ENCODE measurements at regions of chr9 and their contacts with region 1.

Region 1: DNA sequence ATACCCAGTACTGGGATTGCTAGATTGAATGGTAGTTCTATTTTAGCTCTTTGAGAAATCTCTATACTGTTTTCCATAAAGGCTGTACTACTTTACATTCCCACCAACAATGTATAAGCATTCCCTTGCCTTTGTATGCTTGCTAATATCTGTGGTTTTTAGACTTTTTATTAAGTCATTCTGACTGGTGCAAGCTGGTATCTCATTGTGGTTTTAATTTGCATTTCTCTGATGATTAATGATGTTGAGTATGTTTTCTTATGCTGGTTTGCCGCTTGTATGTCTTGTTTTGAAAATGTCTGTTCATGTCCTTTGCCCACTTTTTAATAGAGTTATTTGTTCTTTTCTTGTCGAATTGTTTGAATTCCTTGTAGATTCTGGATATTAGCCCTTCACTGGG is 512.7 kb upstream of the PAPPA start:
- DNase-seq: peak; percentile 87
- ATAC-seq: peak; percentile 66
- H3K4me3 ChIP-seq: no peak overlapping the region
- H3K27ac ChIP-seq: no peak overlapping the region
- H3K4me1 ChIP-seq: peaks cover 14% of the 10 kb centered on the region
- H3K27me3 ChIP-seq: no peaks in the 10 kb centered on the region
- CTCF ChIP-seq: no peak
- POLR2A ChIP-seq: no peak
- RAD21 ChIP-seq: no peak

Region 2: DNA sequence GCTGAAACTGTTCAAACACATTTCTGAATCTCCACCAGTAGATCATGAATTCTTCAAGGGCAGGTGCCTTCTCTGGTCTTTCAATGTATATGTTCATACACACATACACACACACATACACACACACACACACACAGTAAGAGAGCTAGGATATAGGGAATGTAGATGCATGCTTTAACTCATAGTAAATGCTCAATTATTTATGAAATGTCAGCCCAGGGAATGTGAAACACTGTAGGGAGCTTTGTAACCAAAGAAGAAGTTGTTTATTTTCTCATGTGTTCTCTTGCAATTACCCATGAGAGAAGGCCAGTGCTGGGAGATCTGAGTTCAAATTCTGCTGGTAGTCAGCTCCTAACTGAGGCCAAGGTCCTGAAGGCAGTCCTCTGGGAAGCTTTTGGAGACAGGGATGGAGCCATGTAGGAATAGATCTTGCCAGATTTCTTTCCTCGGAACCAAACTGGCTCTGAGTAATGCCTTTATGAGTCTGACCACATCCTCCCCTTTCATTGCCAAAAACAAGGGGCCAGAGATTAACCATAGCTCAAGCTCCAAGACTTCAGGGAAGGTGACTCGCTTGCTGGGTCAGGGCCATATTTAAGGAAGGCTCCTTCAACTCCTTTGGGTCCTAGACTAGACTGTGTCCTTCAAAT is 35.9 kb before region 1 on chr9:
- CTCF ChIA-PET with region 1: no interaction called
- POLR2A ChIA-PET with region 1: no interaction called
- dilution Hi-C with region 1: no loop called
- in situ Hi-C with region 1: no loop called
- intact Hi-C with region 1: loop called (anchors 2 kb)
- DNase-seq: peak; percentile 98
- ATAC-seq: peak; percentile 80
- H3K4me3 ChIP-seq: no peak overlapping the region
- H3K27ac ChIP-seq: peak overlapping the region; percentile 41
- H3K4me1 ChIP-seq: peaks cover 4% of the 10 kb centered on the region; the same call in 1 of the 2 replicates
- H3K27me3 ChIP-seq: no peaks in the 10 kb centered on the region
- CTCF ChIP-seq: no peak
- POLR2A ChIP-seq: no peak
- RAD21 ChIP-seq: peak; percentile 13; the same call in 1 of the 2 replicates

Region 3: GRCh38 chr9:116262448-116262847 is 621.6 kb after region 1 on chr9:
- CTCF ChIA-PET with region 1: no interaction called
- POLR2A ChIA-PET with region 1: no interaction called
- dilution Hi-C with region 1: no loop called
- in situ Hi-C with region 1: no loop called
- intact Hi-C with region 1: no loop called
- DNase-seq: no peak
- ATAC-seq: no peak
- H3K4me3 ChIP-seq: no peak overlapping the region
- H3K27ac ChIP-seq: no peak overlapping the region
- H3K4me1 ChIP-seq: no peaks in the 10 kb centered on the region
- H3K27me3 ChIP-seq: no peaks in the 10 kb centered on the region
- CTCF ChIP-seq: no peak
- POLR2A ChIP-seq: no peak
- RAD21 ChIP-seq: no peak